Gastrocnemius medialis (tissue), 4 donors: ENCODE measurements at regions of chr17 and their contacts with region 1.

Region 1: DNA sequence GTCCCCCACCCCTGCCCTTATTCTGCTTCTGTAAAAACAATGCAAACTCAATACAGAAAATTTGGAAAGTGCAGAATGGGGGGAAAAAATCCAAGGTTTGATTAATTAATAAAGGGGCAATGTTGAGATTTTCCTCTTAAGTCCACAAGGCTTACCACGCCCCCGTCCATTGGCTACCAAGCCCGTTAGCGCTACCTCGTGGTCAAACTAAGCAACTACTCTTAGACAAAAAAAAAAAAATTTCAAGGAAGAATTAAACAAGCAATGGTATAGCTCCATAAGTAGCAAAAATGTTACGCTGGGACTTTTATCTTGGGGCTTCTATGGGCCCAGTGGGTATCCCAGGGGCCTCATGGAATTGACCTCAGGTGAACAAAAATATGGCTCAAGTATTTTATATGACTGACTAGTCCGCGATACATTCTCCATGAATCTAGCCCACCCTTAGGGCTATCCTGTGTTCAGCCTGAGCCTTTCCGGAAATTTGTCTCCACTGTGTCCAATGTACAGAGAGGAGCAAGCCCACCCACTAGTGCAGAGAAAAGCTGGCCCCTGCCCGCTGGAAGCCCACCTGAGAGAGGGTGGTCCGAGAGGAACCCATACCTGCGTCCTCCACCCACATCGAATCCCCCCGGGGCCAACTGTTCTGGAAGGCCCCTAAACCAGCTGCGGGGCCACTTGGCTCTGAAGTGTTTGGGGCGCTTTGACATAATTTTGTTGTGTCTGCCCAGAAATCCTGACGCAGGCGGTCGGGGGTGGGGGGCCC is 19.1 kb upstream of the TEX2 start:
- DNase-seq: peak; percentile 35 to 45
- ATAC-seq: peak; percentile 35 to 41
- H3K4me3 ChIP-seq: peak overlapping the region; percentile 14 to 47 (median 36)
- H3K27ac ChIP-seq: peak overlapping the region; percentile 51 to 71 (median 59)
- H3K4me1 ChIP-seq: peaks cover 23 to 28% of the 10 kb centered on the region in 2 donors
- H3K27me3 ChIP-seq: no peaks in the 10 kb centered on the region
- CTCF ChIP-seq: peak; percentile 72 to 89 (median 85)
- POLR2A ChIP-seq: no peak

Region 2: DNA sequence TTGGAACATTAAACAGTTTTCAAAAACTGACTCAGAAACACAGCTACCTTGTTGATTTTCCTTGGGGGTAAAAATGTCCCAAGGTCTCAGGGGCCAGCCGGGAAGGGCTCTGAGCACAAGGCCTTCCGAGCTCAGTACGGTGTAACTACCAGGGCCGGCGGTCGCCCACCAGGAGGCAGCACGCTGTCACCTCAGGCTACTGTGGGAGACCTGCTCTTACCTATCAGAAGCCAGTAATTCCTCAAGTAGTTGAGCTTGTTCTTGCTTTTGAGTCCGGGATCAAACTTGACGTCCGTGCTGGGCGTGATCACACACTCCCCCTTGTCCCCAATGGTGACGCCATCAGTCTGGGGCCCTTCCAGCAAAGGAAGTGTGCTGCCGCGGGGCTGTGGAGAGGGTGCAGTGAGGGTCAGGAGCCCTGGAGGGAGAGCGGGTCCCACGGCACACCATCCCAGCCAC is 218.3 kb before region 1 on chr17:
- in situ Hi-C with region 1: loop called in 1 of 4 experiments (anchors 25 kb)
- intact Hi-C with region 1: no loop called
- DNase-seq: peak in 1 of 2 donors; percentile 28
- ATAC-seq: no peak
- H3K4me3 ChIP-seq: no peak overlapping the region
- H3K27ac ChIP-seq: no peak overlapping the region
- H3K4me1 ChIP-seq: no peaks in the 10 kb centered on the region
- H3K27me3 ChIP-seq: no peaks in the 10 kb centered on the region
- CTCF ChIP-seq: peak in 3 of 5 experiments; percentile 40 to 55 (median 49)
- POLR2A ChIP-seq: no peak

Region 3: DNA sequence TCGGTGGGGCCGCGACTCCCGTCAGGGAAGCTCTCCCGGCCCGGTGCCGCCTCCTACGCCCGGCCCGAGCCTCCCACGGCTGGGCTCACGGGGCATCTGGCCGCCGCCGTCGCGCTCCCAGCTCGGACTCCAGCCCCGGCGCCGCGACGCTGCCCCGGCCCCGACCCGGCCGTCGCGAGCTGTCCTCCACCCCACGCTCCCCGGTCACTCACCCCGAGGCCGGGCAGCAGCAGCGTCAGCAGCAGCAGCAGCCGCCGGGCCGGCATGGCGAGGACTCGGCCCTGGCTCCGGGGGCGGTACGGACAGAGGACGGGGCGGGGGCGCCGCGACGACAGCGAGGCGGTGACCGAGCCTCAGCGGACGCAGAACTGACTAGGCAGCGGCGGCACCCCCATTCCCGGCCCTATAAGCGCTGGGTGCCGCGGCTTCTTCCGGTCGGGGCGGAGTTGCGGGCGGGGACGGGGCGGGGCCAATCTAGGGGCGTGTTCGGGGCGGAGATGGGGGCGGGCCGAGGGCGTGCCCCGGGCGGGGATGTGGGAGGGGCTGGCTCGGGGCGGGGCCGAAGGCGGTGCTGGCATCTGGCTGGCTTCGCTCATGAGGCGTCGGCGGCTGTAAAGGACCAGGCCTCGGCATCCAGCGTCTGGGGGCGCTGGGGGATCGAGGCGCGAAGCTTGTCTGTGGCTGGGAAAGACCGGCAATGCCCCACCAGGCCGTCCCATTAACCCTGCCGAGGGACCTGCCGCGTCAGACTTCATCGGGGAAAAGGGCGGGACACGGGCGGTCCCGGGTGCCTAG is 152.2 kb before region 1 on chr17 and contains the start of gene ERN1:
- in situ Hi-C with region 1: no loop called
- intact Hi-C with region 1: loop called (anchors 5 kb)
- DNase-seq: peak; percentile 87 to 93
- ATAC-seq: peak; percentile 85 to 88
- H3K4me3 ChIP-seq: peak within 1 kb of the TSS; percentile 60 to 85 (median 78)
- H3K27ac ChIP-seq: peak within 1 kb of the TSS; percentile 88 to 95 (median 92)
- H3K4me1 ChIP-seq: peaks cover 17 to 21% of the 10 kb centered on the region in 2 donors
- H3K27me3 ChIP-seq: no peaks in the 10 kb centered on the region
- CTCF ChIP-seq: peak in 2 of 5 experiments; percentile 3 to 15
- POLR2A ChIP-seq: peak; percentile 89 to 94
- total RNA-seq, gene ERN1: 9.7 to 27.5 (median 13.8) TPM

Region 4: DNA sequence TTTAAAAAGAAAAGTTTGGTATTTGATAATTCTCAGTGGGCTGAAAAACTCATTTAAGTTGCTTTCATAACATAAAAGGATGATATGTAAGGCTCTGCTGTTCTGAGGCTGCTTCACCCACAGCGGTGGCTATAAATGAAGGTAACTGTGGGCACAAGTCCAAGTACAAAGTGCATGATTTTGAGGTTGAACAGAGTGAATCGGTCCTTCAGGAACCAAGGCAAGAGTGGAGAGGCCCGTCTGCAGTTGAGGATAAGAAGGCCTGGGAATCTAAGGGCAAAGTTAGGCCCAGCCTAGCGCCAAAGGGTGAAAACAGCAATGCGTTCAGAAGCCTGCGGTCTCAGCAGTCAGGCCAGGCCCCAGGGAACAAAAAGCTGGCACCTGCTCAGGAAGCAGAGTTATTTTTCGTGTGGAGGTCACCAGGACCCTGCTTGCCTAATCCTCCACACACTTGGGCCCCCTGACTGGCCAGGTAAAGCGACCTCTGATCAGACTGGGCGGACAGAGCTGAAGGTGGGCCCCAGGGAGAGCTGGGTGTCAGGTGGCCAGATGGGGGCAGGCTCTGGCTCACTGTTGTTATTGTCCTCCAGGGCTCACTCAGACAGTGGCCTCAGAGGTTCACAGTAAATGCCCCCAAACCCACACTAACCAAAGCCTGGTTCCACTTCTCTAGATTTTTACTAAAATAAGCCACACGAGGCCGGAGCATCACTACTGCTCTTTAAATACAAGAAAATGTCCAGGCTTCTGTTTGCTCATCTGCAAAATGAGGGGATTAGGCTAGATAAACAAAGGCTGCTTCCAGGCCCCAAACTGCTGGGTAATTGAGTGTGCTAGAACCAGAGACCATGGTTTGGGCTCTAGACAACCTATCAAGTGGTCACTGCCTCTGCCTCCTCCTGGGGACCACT is 65.6 kb before region 1 on chr17:
- in situ Hi-C with region 1: no loop called
- intact Hi-C with region 1: loop called (anchors 1 kb)
- DNase-seq: peak in 1 of 2 donors; percentile 75
- ATAC-seq: peak; percentile 75 to 80
- H3K4me3 ChIP-seq: peak overlapping the region in 1 of 4 donors; percentile 2
- H3K27ac ChIP-seq: peak overlapping the region; percentile 80 to 90 (median 86)
- H3K4me1 ChIP-seq: peaks cover 30 to 70% of the 10 kb centered on the region in 2 donors
- H3K27me3 ChIP-seq: no peaks in the 10 kb centered on the region
- CTCF ChIP-seq: peak in 2 of 5 experiments; percentile 27 to 30
- POLR2A ChIP-seq: no peak

Region 5: GRCh38 chr17:64244165-64244564 is 38.0 kb before region 1 on chr17:
- in situ Hi-C with region 1: no loop called
- intact Hi-C with region 1: no loop called
- DNase-seq: no peak
- ATAC-seq: no peak
- H3K4me3 ChIP-seq: no peak overlapping the region
- H3K27ac ChIP-seq: peak overlapping the region in 1 of 4 donors; percentile 10
- H3K4me1 ChIP-seq: peaks cover 52 to 60% of the 10 kb centered on the region in 2 donors
- H3K27me3 ChIP-seq: no peaks in the 10 kb centered on the region
- CTCF ChIP-seq: no peak
- POLR2A ChIP-seq: no peak

Region 6: DNA sequence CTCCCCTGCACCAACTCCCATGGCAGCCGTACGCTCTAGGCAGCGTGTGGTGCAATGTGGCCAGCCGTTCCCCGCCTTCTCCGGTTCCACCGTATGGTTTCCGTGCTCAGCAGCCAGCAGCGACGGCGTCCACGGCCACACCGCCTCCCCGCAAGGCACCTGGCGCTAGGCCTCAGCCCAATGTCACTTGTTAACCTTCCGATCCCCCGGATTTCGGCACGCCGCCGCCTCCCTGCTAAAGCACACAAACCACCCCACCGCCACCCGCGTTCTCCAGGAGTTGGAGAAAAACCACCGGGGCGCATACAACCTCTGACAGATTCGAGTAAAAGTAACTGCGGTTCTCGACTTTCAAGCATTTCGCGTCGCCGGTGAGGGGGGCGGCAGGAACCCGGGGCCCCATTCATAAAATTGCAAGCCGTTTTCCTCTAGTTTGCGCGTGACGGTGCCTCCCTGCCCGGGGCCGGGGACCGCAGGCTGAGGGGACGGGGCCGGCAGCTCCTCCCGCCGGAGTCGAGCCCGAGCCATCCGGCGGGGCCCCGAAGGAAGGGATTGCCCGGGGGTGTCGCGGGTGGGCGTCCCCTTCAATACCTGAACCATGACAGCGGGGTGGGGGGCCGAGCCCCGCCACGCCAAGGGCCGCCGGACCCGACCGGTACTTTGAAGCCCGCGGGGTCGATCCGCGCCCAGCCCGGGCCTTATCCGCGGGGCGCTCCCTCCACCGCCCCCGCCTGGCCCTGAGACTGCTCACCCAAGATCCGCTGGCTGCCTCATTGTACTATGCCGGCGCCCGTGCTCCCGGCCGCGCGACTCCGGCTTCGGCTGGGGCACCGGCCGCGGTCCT is 19.5 kb before region 1 on chr17 and contains the start of gene TEX2:
- in situ Hi-C with region 1: no loop called
- intact Hi-C with region 1: no loop called
- DNase-seq: peak; percentile 70 to 88
- ATAC-seq: peak; percentile 61 to 66
- H3K4me3 ChIP-seq: peak within 1 kb of the TSS; percentile 90 to 99 (median 96)
- H3K27ac ChIP-seq: peak within 1 kb of the TSS; percentile 96 to 100 (median 98)
- H3K4me1 ChIP-seq: peaks cover 55 to 58% of the 10 kb centered on the region in 2 donors
- H3K27me3 ChIP-seq: no peaks in the 10 kb centered on the region
- CTCF ChIP-seq: no peak
- POLR2A ChIP-seq: peak; percentile 92
- total RNA-seq, gene TEX2: 39.0 to 91.1 (median 77.4) TPM

Region 7: GRCh38 chr17:64315032-64315490 is 32.9 kb after region 1 on chr17:
- in situ Hi-C with region 1: no loop called
- intact Hi-C with region 1: no loop called
- DNase-seq: peak; percentile 64 to 85
- ATAC-seq: peak; percentile 94 to 98
- H3K4me3 ChIP-seq: no peak overlapping the region
- H3K27ac ChIP-seq: peak overlapping the region; percentile 64 to 73 (median 69)
- H3K4me1 ChIP-seq: peaks cover 0 to 9% of the 10 kb centered on the region in 2 donors
- H3K27me3 ChIP-seq: no peaks in the 10 kb centered on the region
- CTCF ChIP-seq: no peak
- POLR2A ChIP-seq: no peak